CD4-positive, alpha-beta T cell (primary cell): ENCODE measurements at regions of chr4 and their contacts with region 1.

Region 1: GRCh38 chr4:87235020-87235671 is 14.7 kb upstream of the KLHL8 start:
- DNase-seq: peak in 1 of 14 experiments; percentile 5
- ATAC-seq: no peak
- H3K4me3 ChIP-seq: peak overlapping the region; percentile 38
- H3K4me3 Mint-ChIP-seq: peak overlapping the region; percentile 89
- H3K27ac ChIP-seq: no peak overlapping the region
- H3K27ac Mint-ChIP-seq: peak overlapping the region; percentile 55
- H3K4me1 ChIP-seq: peaks cover 4% of the 10 kb centered on the region
- H3K4me1 Mint-ChIP-seq: peaks cover 7% of the 10 kb centered on the region
- H3K27me3 ChIP-seq: no peaks in the 10 kb centered on the region
- H3K27me3 Mint-ChIP-seq: peaks cover 12% of the 10 kb centered on the region
- CTCF ChIP-seq: no peak

Region 2: GRCh38 chr4:86497980-86498862 is 736.9 kb before region 1 on chr4:
- CTCF ChIA-PET with region 1: no interaction called
- POLR2A ChIA-PET with region 1: no interaction called
- intact Hi-C with region 1: loop called (anchors 5 to 10 kb)
- DNase-seq: peak in 3 of 14 experiments; percentile 27 to 56 (median 52)
- ATAC-seq: peak; percentile 48
- H3K4me3 ChIP-seq: no peak overlapping the region
- H3K4me3 Mint-ChIP-seq: no peak overlapping the region
- H3K27ac ChIP-seq: no peak overlapping the region
- H3K27ac Mint-ChIP-seq: no peak overlapping the region
- H3K4me1 ChIP-seq: no peaks in the 10 kb centered on the region
- H3K4me1 Mint-ChIP-seq: no peaks in the 10 kb centered on the region
- H3K27me3 ChIP-seq: no peaks in the 10 kb centered on the region
- H3K27me3 Mint-ChIP-seq: peaks cover 11% of the 10 kb centered on the region
- CTCF ChIP-seq: peak; percentile 84

Region 3: GRCh38 chr4:87150498-87151261 is 84.5 kb before region 1 on chr4:
- CTCF ChIA-PET with region 1: interaction called, 27 read pairs
- POLR2A ChIA-PET with region 1: no interaction called
- intact Hi-C with region 1: loop called (anchors 1 kb)
- DNase-seq: peak in 10 of 14 experiments; percentile 14 to 79 (median 42)
- ATAC-seq: peak; percentile 84
- H3K4me3 ChIP-seq: no peak overlapping the region
- H3K4me3 Mint-ChIP-seq: no peak overlapping the region
- H3K27ac ChIP-seq: no peak overlapping the region
- H3K27ac Mint-ChIP-seq: no peak overlapping the region
- H3K4me1 ChIP-seq: no peaks in the 10 kb centered on the region
- H3K4me1 Mint-ChIP-seq: no peaks in the 10 kb centered on the region
- H3K27me3 ChIP-seq: no peaks in the 10 kb centered on the region
- H3K27me3 Mint-ChIP-seq: no peaks in the 10 kb centered on the region
- CTCF ChIP-seq: peak; percentile 97

Region 4: DNA sequence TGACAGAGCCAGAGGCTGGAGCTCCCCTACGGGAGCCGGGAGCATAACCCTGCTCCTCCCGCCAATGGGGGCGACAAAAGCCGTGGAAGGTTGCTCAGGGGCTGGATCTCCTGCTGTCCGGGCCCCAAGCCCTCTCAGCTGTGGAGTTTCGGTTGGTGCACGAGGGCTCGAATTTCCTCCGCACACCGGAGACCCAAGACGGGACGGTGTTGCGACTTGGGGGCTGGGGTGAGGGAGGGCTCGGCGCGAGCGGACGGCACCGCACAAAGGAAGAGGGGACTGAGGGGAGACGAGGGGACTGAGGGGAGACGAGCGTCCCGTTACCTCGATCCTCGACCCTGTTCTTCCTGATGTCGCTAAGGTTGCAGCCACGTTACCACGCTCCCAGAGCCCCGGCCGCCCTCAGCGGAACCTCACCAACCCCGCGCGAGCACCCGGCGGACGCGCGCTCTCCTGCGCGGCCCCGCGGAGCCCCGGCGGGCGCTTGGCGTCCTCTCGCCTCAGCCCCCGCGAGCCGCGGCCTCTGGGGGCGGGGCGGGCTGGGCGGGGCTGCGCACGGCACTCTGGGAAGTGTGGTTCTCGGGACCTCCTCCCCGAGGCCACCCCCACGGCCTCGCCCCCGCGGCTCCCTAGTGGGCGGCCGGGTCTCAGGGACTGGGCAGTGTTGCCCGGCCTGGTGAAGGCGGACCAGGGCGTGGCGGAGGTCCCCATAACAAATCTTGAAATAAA is 14.9 kb before region 1 on chr4 and contains the start of gene KLHL8:
- CTCF ChIA-PET with region 1: interaction called, 10 read pairs
- POLR2A ChIA-PET with region 1: interaction called, 5 read pairs
- intact Hi-C with region 1: loop called in 1 of 2 experiments (anchors 2 kb)
- DNase-seq: peak; percentile 71 to 94 (median 83)
- ATAC-seq: peak; percentile 88
- H3K4me3 ChIP-seq: peak within 1 kb of the TSS; percentile 96
- H3K4me3 Mint-ChIP-seq: peak within 1 kb of the TSS; percentile 96
- H3K27ac ChIP-seq: peak within 1 kb of the TSS; percentile 79 to 88
- H3K27ac Mint-ChIP-seq: peak within 1 kb of the TSS; percentile 88
- H3K4me1 ChIP-seq: peaks cover 24% of the 10 kb centered on the region
- H3K4me1 Mint-ChIP-seq: peaks cover 24% of the 10 kb centered on the region
- H3K27me3 ChIP-seq: no peaks in the 10 kb centered on the region
- H3K27me3 Mint-ChIP-seq: no peaks in the 10 kb centered on the region
- CTCF ChIP-seq: no peak
- total RNA-seq, gene KLHL8: 6.3 to 7.0 TPM

Region 5: GRCh38 chr4:87422104-87423052 is 187.2 kb after region 1 on chr4 and contains the start of gene NUDT9:
- CTCF ChIA-PET with region 1: no interaction called
- POLR2A ChIA-PET with region 1: no interaction called
- intact Hi-C with region 1: loop called in 1 of 2 experiments (anchors 5 kb)
- DNase-seq: peak; percentile 66 to 93 (median 80)
- ATAC-seq: peak; percentile 80
- H3K4me3 ChIP-seq: peak within 1 kb of the TSS; percentile 77
- H3K4me3 Mint-ChIP-seq: peak within 1 kb of the TSS; percentile 95
- H3K27ac ChIP-seq: peak within 1 kb of the TSS; percentile 76 to 87
- H3K27ac Mint-ChIP-seq: peak within 1 kb of the TSS; percentile 97
- H3K4me1 ChIP-seq: peaks cover 31% of the 10 kb centered on the region
- H3K4me1 Mint-ChIP-seq: peaks cover 52% of the 10 kb centered on the region
- H3K27me3 ChIP-seq: no peaks in the 10 kb centered on the region
- H3K27me3 Mint-ChIP-seq: no peaks in the 10 kb centered on the region
- CTCF ChIP-seq: peak; percentile 18
- total RNA-seq, gene NUDT9: 4.4 to 4.8 TPM

Region 6: GRCh38 chr4:88728146-88728545 is 1493.0 kb after region 1 on chr4:
- CTCF ChIA-PET with region 1: no interaction called
- POLR2A ChIA-PET with region 1: no interaction called
- intact Hi-C with region 1: no loop called
- DNase-seq: no peak
- ATAC-seq: no peak
- H3K4me3 ChIP-seq: no peak overlapping the region
- H3K4me3 Mint-ChIP-seq: no peak overlapping the region
- H3K27ac ChIP-seq: no peak overlapping the region
- H3K27ac Mint-ChIP-seq: peak overlapping the region; percentile 7
- H3K4me1 ChIP-seq: no peaks in the 10 kb centered on the region
- H3K4me1 Mint-ChIP-seq: no peaks in the 10 kb centered on the region
- H3K27me3 ChIP-seq: no peaks in the 10 kb centered on the region
- H3K27me3 Mint-ChIP-seq: no peaks in the 10 kb centered on the region
- CTCF ChIP-seq: no peak